Natural killer cell (primary cell): ENCODE measurements at regions of chr9 and their contacts with region 1.

Region 1: GRCh38 chr9:120714088-120714845 is at the start of gene MEGF9:
- DNase-seq: peak; percentile 97
- ATAC-seq: peak; percentile 90 to 98 (median 95)
- H3K4me3 ChIP-seq: peak within 1 kb of the TSS; percentile 67
- H3K4me3 Mint-ChIP-seq: peak within 1 kb of the TSS; percentile 95
- H3K27ac ChIP-seq: peak within 1 kb of the TSS; percentile 64
- H3K27ac Mint-ChIP-seq: peak within 1 kb of the TSS; percentile 90 to 94
- H3K4me1 ChIP-seq: peaks cover 29% of the 10 kb centered on the region
- H3K4me1 Mint-ChIP-seq: peaks cover 24 to 35% of the 10 kb centered on the region in 2 donors
- H3K27me3 ChIP-seq: no peaks in the 10 kb centered on the region
- H3K27me3 Mint-ChIP-seq: no peaks in the 10 kb centered on the region
- CTCF ChIP-seq: no peak
- total RNA-seq, gene MEGF9: 17.5 to 25.9 (median 22.3) TPM

Region 2: GRCh38 chr9:120579750-120580590 is 134.3 kb before region 1 on chr9 and contains the start of gene CDK5RAP2:
- intact Hi-C with region 1: loop called (anchors 2 kb)
- DNase-seq: peak; percentile 85 to 97
- ATAC-seq: peak; percentile 96 to 98 (median 97)
- H3K4me3 ChIP-seq: peak within 1 kb of the TSS; percentile 95
- H3K4me3 Mint-ChIP-seq: peak within 1 kb of the TSS; percentile 96
- H3K27ac ChIP-seq: peak within 1 kb of the TSS; percentile 88
- H3K27ac Mint-ChIP-seq: peak within 1 kb of the TSS; percentile 92 to 95
- H3K4me1 ChIP-seq: peaks cover 28% of the 10 kb centered on the region
- H3K4me1 Mint-ChIP-seq: peaks cover 29 to 44% of the 10 kb centered on the region in 2 donors
- H3K27me3 ChIP-seq: no peaks in the 10 kb centered on the region
- H3K27me3 Mint-ChIP-seq: no peaks in the 10 kb centered on the region
- CTCF ChIP-seq: no peak
- total RNA-seq, gene CDK5RAP2: 81.5 to 95.7 (median 82.4) TPM

Region 3: DNA sequence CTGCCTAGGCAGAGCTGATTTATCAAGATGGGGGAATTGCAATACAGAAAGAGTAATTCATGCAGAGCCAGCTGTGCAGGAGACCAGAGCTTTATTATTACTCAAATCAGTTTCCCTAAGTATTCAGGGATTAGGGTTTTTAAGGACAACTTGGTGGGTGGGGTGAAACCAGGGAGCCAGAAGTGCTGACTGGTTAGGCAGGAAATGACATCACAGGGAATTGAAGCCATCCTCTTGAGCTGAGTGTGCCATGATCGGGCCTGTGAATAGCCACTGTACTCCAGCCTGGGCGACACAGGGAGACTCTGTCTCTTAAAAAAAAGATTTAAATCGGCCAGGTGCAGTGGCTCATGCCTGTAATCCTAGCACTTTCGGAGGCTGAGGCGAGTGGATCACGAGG is 89.0 kb before region 1 on chr9:
- intact Hi-C with region 1: no loop called
- DNase-seq: no peak
- ATAC-seq: no peak
- H3K4me3 ChIP-seq: no peak overlapping the region
- H3K4me3 Mint-ChIP-seq: no peak overlapping the region
- H3K27ac ChIP-seq: no peak overlapping the region
- H3K27ac Mint-ChIP-seq: no peak overlapping the region
- H3K4me1 ChIP-seq: no peaks in the 10 kb centered on the region
- H3K4me1 Mint-ChIP-seq: peaks cover under 1 to 6% of the 10 kb centered on the region in 2 donors
- H3K27me3 ChIP-seq: no peaks in the 10 kb centered on the region
- H3K27me3 Mint-ChIP-seq: no peaks in the 10 kb centered on the region
- CTCF ChIP-seq: no peak

Region 4: GRCh38 chr9:120868676-120869359 is 154.6 kb after region 1 on chr9:
- intact Hi-C with region 1: loop called (anchors 1 kb)
- DNase-seq: peak; percentile 93 to 96
- ATAC-seq: peak; percentile 81 to 93 (median 83)
- H3K4me3 ChIP-seq: peak overlapping the region; percentile 68
- H3K4me3 Mint-ChIP-seq: peak overlapping the region; percentile 94
- H3K27ac ChIP-seq: peak overlapping the region; percentile 78
- H3K27ac Mint-ChIP-seq: peak overlapping the region; percentile 92 to 94
- H3K4me1 ChIP-seq: peaks cover 16% of the 10 kb centered on the region
- H3K4me1 Mint-ChIP-seq: peaks cover 4 to 22% of the 10 kb centered on the region in 2 donors
- H3K27me3 ChIP-seq: no peaks in the 10 kb centered on the region
- H3K27me3 Mint-ChIP-seq: no peaks in the 10 kb centered on the region
- CTCF ChIP-seq: peak; percentile 57

Region 5: DNA sequence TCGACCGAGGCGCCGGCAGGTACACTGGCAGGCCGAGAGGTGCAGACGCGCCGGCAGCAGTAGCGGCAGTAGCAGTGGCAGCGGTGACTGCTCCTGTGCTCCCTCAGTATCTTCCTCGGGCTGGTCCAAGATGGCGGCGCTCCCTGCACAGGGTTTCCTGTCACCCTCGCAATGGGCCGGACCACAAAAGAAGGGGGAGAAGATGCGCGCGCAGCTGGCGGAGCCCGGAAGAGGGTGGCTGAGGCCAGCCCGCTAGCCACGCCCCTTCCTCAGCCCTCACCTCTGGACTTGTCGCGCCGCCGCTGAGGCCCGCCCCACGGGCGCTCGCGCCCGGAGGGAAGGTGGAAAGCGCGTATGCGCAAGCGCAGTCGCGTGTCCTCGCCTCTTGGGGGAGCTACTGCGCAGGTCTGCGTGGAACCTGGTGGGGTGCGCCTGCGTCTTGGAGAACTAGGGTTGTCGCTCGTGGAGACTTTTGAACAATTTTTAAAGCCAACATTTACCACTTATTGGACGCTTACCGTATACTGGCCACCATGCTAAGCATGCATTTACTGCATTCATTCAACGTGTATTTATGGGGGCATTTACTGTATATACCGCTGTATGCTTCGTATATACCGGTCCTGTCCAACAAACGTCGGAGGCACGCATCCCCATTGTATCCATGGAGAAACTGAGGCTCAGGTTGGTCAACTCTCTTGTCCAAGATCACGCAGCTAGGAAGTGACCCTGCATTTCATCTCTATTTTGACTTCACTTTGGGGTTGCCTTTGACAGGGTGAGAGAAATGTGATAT is 487.7 kb after region 1 on chr9 and contains the start of gene RAB14:
- intact Hi-C with region 1: loop called (anchors 5 kb)
- DNase-seq: peak; percentile 100
- ATAC-seq: peak; percentile 88 to 96 (median 89)
- H3K4me3 ChIP-seq: peak within 1 kb of the TSS; percentile 96
- H3K4me3 Mint-ChIP-seq: peak within 1 kb of the TSS; percentile 94
- H3K27ac ChIP-seq: peak within 1 kb of the TSS; percentile 92
- H3K27ac Mint-ChIP-seq: peak within 1 kb of the TSS; percentile 89 to 94
- H3K4me1 ChIP-seq: peaks cover 19% of the 10 kb centered on the region
- H3K4me1 Mint-ChIP-seq: peaks cover 47 to 50% of the 10 kb centered on the region in 2 donors
- H3K27me3 ChIP-seq: no peaks in the 10 kb centered on the region
- H3K27me3 Mint-ChIP-seq: no peaks in the 10 kb centered on the region
- CTCF ChIP-seq: peak; percentile 42
- total RNA-seq, gene RAB14: 46.2 to 67.6 (median 57.3) TPM